ENCODE measurements at regions of chr6 and their contacts with region 1.

Region 1: DNA sequence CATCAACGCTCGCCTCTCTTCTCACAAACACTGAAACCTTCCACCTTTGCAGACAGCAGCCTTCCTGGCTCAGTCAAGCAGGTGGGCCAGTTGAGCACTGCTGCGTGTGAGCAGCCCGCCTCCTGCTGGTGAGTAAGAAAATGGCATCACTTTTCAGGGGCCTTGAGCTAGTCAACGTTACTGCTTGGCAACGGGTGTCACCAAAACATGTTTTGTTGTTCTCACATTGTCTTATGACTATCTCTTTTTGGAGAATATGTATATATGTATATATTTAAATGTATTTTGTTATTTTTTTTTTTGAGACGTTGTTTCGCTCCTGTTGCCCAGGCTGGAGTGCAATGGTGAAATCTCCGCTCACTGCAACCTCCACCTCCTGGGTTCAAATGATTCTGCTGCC is 97.0 kb upstream of the AGPAT4 start:
- DNase-seq: peak; percentile 70 to 82
- H3K4me3 ChIP-seq: no peak overlapping the region
- H3K4me3 Mint-ChIP-seq: no peak overlapping the region
- H3K27ac Mint-ChIP-seq: no peak overlapping the region
- H3K4me1 ChIP-seq: peaks cover 10% of the 10 kb centered on the region
- H3K4me1 Mint-ChIP-seq: peaks cover 10% of the 10 kb centered on the region
- H3K27me3 ChIP-seq: no peaks in the 10 kb centered on the region
- H3K27me3 Mint-ChIP-seq: no peaks in the 10 kb centered on the region
- CTCF ChIP-seq: peak; percentile 86 to 94

Region 2: DNA sequence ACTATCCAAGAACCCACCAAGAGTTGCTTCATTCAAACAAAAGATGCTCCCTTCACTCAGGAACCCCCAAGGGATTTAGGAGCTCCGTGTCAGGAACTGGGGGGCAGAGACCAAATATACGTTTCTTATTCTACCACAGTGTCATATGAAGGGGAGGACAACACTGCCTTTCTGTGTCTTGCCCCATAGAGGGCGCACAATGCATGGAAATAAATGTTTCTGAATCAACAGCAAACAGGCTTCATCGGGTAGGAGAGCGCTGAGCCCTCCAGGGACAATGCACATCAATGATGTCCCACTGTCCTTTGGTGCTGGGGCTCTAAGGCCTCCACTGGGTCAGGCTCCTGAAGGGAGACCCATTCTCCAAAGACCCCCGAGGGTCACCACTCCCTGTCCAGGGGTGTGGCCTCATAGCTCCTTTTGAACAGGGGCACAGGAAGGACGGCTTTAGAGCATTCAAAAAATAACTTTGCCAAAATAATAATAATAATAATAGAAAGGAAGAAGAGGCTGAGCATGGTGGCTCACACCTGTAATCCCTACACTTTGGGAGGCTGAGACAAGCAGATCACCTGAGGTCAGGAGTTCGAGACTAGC is 637.7 kb before region 1 on chr6:
- CTCF ChIA-PET with region 1: interaction called, 4 read pairs
- POLR2A ChIA-PET with region 1: no interaction called
- intact Hi-C with region 1: loop called (anchors 1 kb)
- DNase-seq: peak; percentile 36 to 42
- H3K4me3 ChIP-seq: no peak overlapping the region
- H3K4me3 Mint-ChIP-seq: no peak overlapping the region
- H3K27ac Mint-ChIP-seq: no peak overlapping the region
- H3K4me1 ChIP-seq: no peaks in the 10 kb centered on the region
- H3K4me1 Mint-ChIP-seq: no peaks in the 10 kb centered on the region
- H3K27me3 ChIP-seq: no peaks in the 10 kb centered on the region
- H3K27me3 Mint-ChIP-seq: peaks cover 2% of the 10 kb centered on the region
- CTCF ChIP-seq: peak; percentile 62 to 68

Region 3: DNA sequence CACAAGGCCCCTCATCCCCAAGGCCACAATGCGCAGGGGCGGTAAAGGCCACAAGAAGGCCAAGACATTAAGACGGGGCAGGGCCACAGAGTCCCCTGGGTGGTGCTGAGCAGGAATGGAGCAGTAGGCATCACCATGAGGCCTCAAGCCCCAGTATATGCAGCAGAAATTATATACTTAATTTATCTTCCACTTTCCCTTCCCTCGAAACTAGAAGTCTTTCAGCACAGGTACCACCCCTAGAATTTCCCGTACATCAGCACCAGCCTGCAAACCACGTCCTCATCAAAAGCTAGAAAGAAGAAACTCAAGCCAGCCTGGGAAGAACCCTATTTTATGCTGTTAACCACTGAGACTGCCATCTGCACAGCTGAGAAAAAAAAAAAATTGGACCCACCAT is 579.4 kb before region 1 on chr6:
- CTCF ChIA-PET with region 1: no interaction called
- POLR2A ChIA-PET with region 1: no interaction called
- intact Hi-C with region 1: loop called (anchors 5 kb)
- DNase-seq: no peak
- H3K4me3 ChIP-seq: no peak overlapping the region
- H3K4me3 Mint-ChIP-seq: no peak overlapping the region
- H3K27ac Mint-ChIP-seq: no peak overlapping the region
- H3K4me1 ChIP-seq: no peaks in the 10 kb centered on the region
- H3K4me1 Mint-ChIP-seq: no peaks in the 10 kb centered on the region
- H3K27me3 ChIP-seq: no peaks in the 10 kb centered on the region
- H3K27me3 Mint-ChIP-seq: no peaks in the 10 kb centered on the region
- CTCF ChIP-seq: no peak

Region 4: DNA sequence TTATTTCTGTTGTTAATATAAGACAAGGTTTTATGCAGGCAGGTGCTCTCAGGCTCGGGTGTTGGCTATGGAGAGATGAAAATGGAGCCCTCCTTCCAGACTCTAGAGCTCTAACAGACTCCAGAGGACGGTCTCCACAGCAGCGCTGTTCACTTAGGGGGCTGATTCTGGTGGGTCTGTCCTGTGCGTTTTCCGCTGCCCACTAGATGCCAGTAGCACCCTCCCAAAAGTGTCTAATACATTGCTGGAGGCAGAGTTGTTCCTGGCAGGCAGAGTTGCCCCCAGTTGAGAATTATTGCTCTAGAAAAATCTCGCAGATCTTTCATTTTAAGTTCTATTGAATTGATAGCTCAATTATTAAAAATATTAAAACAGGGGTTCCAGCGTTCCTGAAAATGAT is 269.4 kb before region 1 on chr6:
- CTCF ChIA-PET with region 1: no interaction called
- POLR2A ChIA-PET with region 1: no interaction called
- intact Hi-C with region 1: loop called (anchors 1 kb)
- DNase-seq: no peak
- H3K4me3 ChIP-seq: no peak overlapping the region
- H3K4me3 Mint-ChIP-seq: no peak overlapping the region
- H3K27ac Mint-ChIP-seq: no peak overlapping the region
- H3K4me1 ChIP-seq: no peaks in the 10 kb centered on the region
- H3K4me1 Mint-ChIP-seq: no peaks in the 10 kb centered on the region
- H3K27me3 ChIP-seq: no peaks in the 10 kb centered on the region
- H3K27me3 Mint-ChIP-seq: no peaks in the 10 kb centered on the region
- CTCF ChIP-seq: peak in 1 of 2 experiments; percentile 18

Region 5: DNA sequence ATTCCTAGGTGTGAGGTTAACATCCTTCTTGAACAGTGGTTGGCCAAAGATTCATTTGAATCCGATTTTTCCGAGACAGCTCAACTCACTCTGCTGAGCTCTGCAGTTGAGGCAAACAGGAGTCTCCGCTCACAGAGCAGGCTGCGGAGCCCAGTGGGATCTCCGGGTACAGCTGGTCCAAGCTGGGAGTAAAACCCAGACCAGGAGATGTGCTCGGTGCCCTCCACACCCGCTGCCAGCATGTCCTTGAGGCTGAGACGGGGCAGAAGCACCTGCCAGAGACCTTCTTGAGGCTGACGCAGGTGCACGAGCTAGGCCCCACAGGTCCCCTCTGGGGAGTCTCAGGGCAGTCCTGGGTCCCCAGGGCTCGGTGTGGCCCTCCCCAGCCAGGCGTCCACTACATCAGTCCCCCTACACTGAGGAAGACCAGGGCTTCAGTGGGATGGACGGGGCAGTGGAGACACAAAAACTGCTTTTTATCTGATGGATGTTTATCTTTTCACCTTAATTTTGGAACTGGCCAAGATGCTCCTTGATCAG is 216.0 kb before region 1 on chr6:
- CTCF ChIA-PET with region 1: interaction called, 10 read pairs
- POLR2A ChIA-PET with region 1: no interaction called
- intact Hi-C with region 1: no loop called
- DNase-seq: no peak
- H3K4me3 ChIP-seq: no peak overlapping the region
- H3K4me3 Mint-ChIP-seq: no peak overlapping the region
- H3K27ac Mint-ChIP-seq: no peak overlapping the region
- H3K4me1 ChIP-seq: no peaks in the 10 kb centered on the region
- H3K4me1 Mint-ChIP-seq: no peaks in the 10 kb centered on the region
- H3K27me3 ChIP-seq: no peaks in the 10 kb centered on the region
- H3K27me3 Mint-ChIP-seq: no peaks in the 10 kb centered on the region
- CTCF ChIP-seq: no peak

Region 6: DNA sequence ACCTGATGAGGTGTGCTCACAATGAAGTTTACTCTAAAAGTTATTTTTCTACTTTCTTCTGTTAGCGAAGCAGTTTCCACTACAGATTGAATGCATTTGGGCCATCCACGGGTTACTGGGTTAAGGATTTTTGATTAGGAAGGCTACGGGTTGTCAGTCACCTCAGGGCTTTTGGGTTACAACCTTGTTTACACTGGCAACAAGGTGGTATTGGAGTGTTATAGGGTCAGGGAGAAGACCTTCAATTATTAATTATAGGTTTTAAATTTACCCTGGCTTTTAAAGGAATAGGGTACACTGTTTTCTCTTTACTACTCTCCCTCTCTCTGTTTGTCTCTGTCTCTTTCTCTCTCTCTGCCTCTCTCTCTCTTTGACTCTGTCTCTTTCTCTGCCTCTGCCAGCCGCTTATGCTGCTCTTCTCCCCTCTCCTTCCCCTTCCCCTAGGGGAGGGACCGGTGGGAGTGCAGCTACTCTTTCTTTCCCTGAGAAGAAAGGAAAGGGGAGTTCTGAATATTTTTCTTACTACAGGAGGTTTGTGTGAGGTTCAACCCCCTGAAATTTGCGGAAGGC is 56.9 kb before region 1 on chr6:
- CTCF ChIA-PET with region 1: no interaction called
- POLR2A ChIA-PET with region 1: no interaction called
- intact Hi-C with region 1: loop called (anchors 5 kb)
- DNase-seq: no peak
- H3K4me3 ChIP-seq: no peak overlapping the region
- H3K4me3 Mint-ChIP-seq: no peak overlapping the region
- H3K27ac Mint-ChIP-seq: no peak overlapping the region
- H3K4me1 ChIP-seq: no peaks in the 10 kb centered on the region
- H3K4me1 Mint-ChIP-seq: no peaks in the 10 kb centered on the region
- H3K27me3 ChIP-seq: no peaks in the 10 kb centered on the region
- H3K27me3 Mint-ChIP-seq: no peaks in the 10 kb centered on the region
- CTCF ChIP-seq: no peak

Region 7: GRCh38 chr6:161353208-161353613 is 17.7 kb before region 1 on chr6:
- CTCF ChIA-PET with region 1: interaction called, 19 read pairs
- POLR2A ChIA-PET with region 1: no interaction called
- intact Hi-C with region 1: loop called (anchors 1 kb)
- DNase-seq: peak; percentile 73 to 79
- H3K4me3 ChIP-seq: no peak overlapping the region
- H3K4me3 Mint-ChIP-seq: no peak overlapping the region
- H3K27ac Mint-ChIP-seq: no peak overlapping the region
- H3K4me1 ChIP-seq: peaks cover 21% of the 10 kb centered on the region
- H3K4me1 Mint-ChIP-seq: peaks cover 17% of the 10 kb centered on the region
- H3K27me3 ChIP-seq: no peaks in the 10 kb centered on the region
- H3K27me3 Mint-ChIP-seq: no peaks in the 10 kb centered on the region
- CTCF ChIP-seq: peak; percentile 26 to 47